ENCODE measurements at regions of chr11 and their contacts with region 1.

Region 1: GRCh38 chr11:117384041-117384440 is 56.4 kb downstream of the CEP164 start:
- DNase-seq: peak; percentile 96
- ATAC-seq: peak; percentile 81
- H3K4me3 ChIP-seq: no peak overlapping the region
- H3K27ac ChIP-seq: no peak overlapping the region
- H3K4me1 ChIP-seq: peaks cover 9% of the 10 kb centered on the region
- H3K27me3 ChIP-seq: no peaks in the 10 kb centered on the region
- CTCF ChIP-seq: no peak
- POLR2A ChIP-seq: no peak
- RAD21 ChIP-seq: no peak

Region 2: DNA sequence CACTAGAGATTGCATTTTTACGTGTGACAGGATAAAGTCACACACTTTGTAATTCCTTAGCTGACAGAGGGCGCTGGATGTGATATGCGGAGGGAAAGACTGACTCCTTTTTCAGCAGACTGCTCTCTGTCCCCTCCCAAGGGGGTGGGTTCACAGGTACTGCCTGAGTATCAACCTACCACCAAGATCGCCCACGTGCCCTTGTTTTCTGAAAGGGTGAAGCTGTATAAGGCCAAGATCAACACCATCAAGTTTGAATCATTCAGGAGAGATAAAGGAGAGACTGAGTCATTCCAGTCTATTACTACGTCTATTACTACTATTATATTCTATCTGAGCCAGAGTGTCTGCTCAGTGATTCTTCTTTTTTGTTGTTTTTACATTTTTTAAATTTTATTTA is 641.9 kb before region 1 on chr11:
- CTCF ChIA-PET with region 1: no interaction called
- POLR2A ChIA-PET with region 1: no interaction called
- dilution Hi-C with region 1: no loop called
- in situ Hi-C with region 1: no loop called
- intact Hi-C with region 1: loop called (anchors 10 kb)
- DNase-seq: peak; percentile 62
- ATAC-seq: peak; percentile 42
- H3K4me3 ChIP-seq: no peak overlapping the region
- H3K27ac ChIP-seq: no peak overlapping the region; the same call in 1 of the 2 replicates
- H3K4me1 ChIP-seq: peaks cover 7% of the 10 kb centered on the region
- H3K27me3 ChIP-seq: no peaks in the 10 kb centered on the region
- CTCF ChIP-seq: no peak
- POLR2A ChIP-seq: no peak
- RAD21 ChIP-seq: no peak